ENCODE measurements at regions of chr10 and their contacts with region 1.

Region 1: GRCh38 chr10:100518761-100519241 is 860 bp downstream of the SEC31B start:
- DNase-seq: peak in 1 of 2 experiments; percentile 79
- H3K4me3 ChIP-seq: peak overlapping the region in 3 of 4 experiments; percentile 45 to 61 (median 56); a peak in 6 of 8 replicates
- H3K27ac ChIP-seq: no peak overlapping the region
- H3K4me1 ChIP-seq: peaks cover 0 to 3% (median under 1%) of the 10 kb centered on the region in 4 experiments; a peak in 2 of 7 replicates
- H3K27me3 ChIP-seq: peaks cover 2 to 24% (median 15%) of the 10 kb centered on the region in 4 experiments; a peak in 6 of 7 replicates
- CTCF ChIP-seq: peak in 2 of 3 experiments; percentile 66 to 69; a peak in 3 of 4 replicates
- EP300 ChIP-seq: no peak
- POLR2A ChIP-seq: no peak
- RAD21 ChIP-seq: peak; percentile 66 to 74

Region 2: GRCh38 chr10:100158044-100158808 is 360.6 kb before region 1 on chr10:
- CTCF ChIA-PET with region 1: no interaction called
- POLR2A ChIA-PET with region 1: no interaction called
- DNase-seq: no peak
- H3K4me3 ChIP-seq: no peak overlapping the region
- H3K27ac ChIP-seq: no peak overlapping the region
- H3K4me1 ChIP-seq: no peaks in the 10 kb centered on the region
- H3K27me3 ChIP-seq: no peaks in the 10 kb centered on the region
- CTCF ChIP-seq: no peak
- EP300 ChIP-seq: no peak
- POLR2A ChIP-seq: no peak
- RAD21 ChIP-seq: no peak

Region 3: GRCh38 chr10:100433253-100434240 is 85.3 kb before region 1 on chr10:
- CTCF ChIA-PET with region 1: interaction called, 190 read pairs
- POLR2A ChIA-PET with region 1: interaction called, 3 read pairs
- DNase-seq: peak; percentile 95 to 99
- H3K4me3 ChIP-seq: no peak overlapping the region
- H3K27ac ChIP-seq: no peak overlapping the region
- H3K4me1 ChIP-seq: peaks cover 0 to 2% (median 0%) of the 10 kb centered on the region in 4 experiments; a peak in 1 of 7 replicates
- H3K27me3 ChIP-seq: no peaks in the 10 kb centered on the region
- CTCF ChIP-seq: peak; percentile 86 to 100 (median 99)
- EP300 ChIP-seq: no peak
- POLR2A ChIP-seq: no peak
- RAD21 ChIP-seq: peak; percentile 99 to 100

Region 4: GRCh38 chr10:100446130-100446761 is 72.6 kb before region 1 on chr10:
- CTCF ChIA-PET with region 1: interaction called, 26 read pairs
- POLR2A ChIA-PET with region 1: no interaction called
- DNase-seq: no peak
- H3K4me3 ChIP-seq: no peak overlapping the region
- H3K27ac ChIP-seq: no peak overlapping the region
- H3K4me1 ChIP-seq: no peaks in the 10 kb centered on the region
- H3K27me3 ChIP-seq: no peaks in the 10 kb centered on the region; a peak in 1 of 7 replicates
- CTCF ChIP-seq: no peak
- EP300 ChIP-seq: no peak
- POLR2A ChIP-seq: no peak
- RAD21 ChIP-seq: no peak

Region 5: DNA sequence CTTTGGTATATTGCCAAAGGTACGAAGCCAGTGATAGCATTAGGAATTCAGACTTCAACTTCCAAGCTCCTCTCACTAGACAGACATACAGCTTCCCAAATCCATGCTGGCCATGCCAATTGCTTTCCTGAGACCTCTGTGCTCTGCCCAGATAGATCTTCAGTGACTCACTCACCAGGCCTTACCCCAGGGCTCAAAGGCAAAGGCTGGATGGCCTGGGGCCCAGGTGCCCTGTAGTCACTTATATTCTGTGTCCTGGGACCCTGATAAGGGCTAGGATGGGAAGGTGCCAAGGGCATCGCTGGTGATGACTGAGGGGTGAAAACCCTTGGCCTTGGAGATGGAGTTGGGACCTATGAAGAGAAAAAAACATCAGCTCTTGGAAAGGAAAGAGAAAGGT is 28.3 kb before region 1 on chr10:
- CTCF ChIA-PET with region 1: interaction called, 114 read pairs
- POLR2A ChIA-PET with region 1: interaction called, 9 read pairs
- DNase-seq: no peak
- H3K4me3 ChIP-seq: no peak overlapping the region
- H3K27ac ChIP-seq: no peak overlapping the region
- H3K4me1 ChIP-seq: peaks cover 7 to 10% (median 8%) of the 10 kb centered on the region in 4 experiments; a peak in 6 of 7 replicates
- H3K27me3 ChIP-seq: peaks cover 45 to 71% (median 60%) of the 10 kb centered on the region in 4 experiments
- CTCF ChIP-seq: no peak
- EP300 ChIP-seq: no peak
- POLR2A ChIP-seq: no peak
- RAD21 ChIP-seq: no peak

Region 6: DNA sequence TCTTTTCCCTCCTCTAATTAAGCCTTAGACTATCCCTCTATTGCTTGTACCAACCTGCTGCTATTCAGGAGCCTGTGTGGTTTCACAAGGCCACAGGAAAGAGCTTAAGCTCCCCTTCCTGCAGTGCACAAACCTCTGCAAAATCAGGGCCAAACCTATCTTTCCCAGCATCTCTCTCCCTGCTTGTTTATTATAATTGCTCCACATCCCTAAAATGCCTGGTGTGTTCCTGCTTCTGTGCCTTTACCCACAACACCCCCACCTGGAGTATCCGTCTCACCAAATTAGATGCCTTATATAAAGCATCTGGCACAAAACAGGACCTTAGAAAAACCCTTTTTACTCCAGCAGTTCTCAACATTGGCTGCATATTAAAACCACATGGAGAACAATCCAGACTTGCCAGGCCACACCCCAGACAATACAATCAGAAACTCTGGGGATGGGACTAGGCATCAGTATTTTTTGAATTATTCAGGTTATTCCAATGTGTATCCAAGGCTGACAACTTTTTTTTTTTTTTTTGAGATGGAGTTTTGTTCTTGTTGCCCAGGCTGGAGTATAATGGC is 15.8 kb before region 1 on chr10:
- CTCF ChIA-PET with region 1: interaction called, 84 read pairs
- POLR2A ChIA-PET with region 1: interaction called, 3 read pairs
- DNase-seq: no peak
- H3K4me3 ChIP-seq: no peak overlapping the region
- H3K27ac ChIP-seq: no peak overlapping the region
- H3K4me1 ChIP-seq: no peaks in the 10 kb centered on the region; a peak in 1 of 7 replicates
- H3K27me3 ChIP-seq: peaks cover 0 to 24% (median 4%) of the 10 kb centered on the region in 4 experiments; a peak in 3 of 7 replicates
- CTCF ChIP-seq: no peak
- EP300 ChIP-seq: no peak
- POLR2A ChIP-seq: no peak
- RAD21 ChIP-seq: no peak

Region 7: GRCh38 chr10:100529475-100530298 is 10.9 kb after region 1 on chr10 and contains the start of gene NDUFB8:
- CTCF ChIA-PET with region 1: interaction called, 70 read pairs
- POLR2A ChIA-PET with region 1: interaction called, 5 read pairs
- DNase-seq: peak; percentile 49 to 95
- H3K4me3 ChIP-seq: peak within 1 kb of the TSS; percentile 81 to 95 (median 90)
- H3K27ac ChIP-seq: peak within 1 kb of the TSS; percentile 24; the same call in 1 of the 2 replicates
- H3K4me1 ChIP-seq: peaks cover 0 to 5% (median 4%) of the 10 kb centered on the region in 4 experiments; a peak in 3 of 7 replicates
- H3K27me3 ChIP-seq: no peaks in the 10 kb centered on the region
- CTCF ChIP-seq: no peak
- EP300 ChIP-seq: no peak
- POLR2A ChIP-seq: peak; percentile 81 to 82
- RAD21 ChIP-seq: no peak
- total RNA-seq, gene NDUFB8: 175 and 189 TPM in 2 replicates

Region 8: GRCh38 chr10:100551196-100551595 is 32.4 kb after region 1 on chr10:
- CTCF ChIA-PET with region 1: interaction called, 10 read pairs
- POLR2A ChIA-PET with region 1: interaction called, 4 read pairs
- DNase-seq: no peak
- H3K4me3 ChIP-seq: no peak overlapping the region
- H3K27ac ChIP-seq: no peak overlapping the region
- H3K4me1 ChIP-seq: no peaks in the 10 kb centered on the region
- H3K27me3 ChIP-seq: no peaks in the 10 kb centered on the region
- CTCF ChIP-seq: no peak
- EP300 ChIP-seq: no peak
- POLR2A ChIP-seq: no peak
- RAD21 ChIP-seq: no peak